Right cardiac atrium (tissue), 5 donors: ENCODE measurements at regions of chr5 and their contacts with region 1.

Region 1: DNA sequence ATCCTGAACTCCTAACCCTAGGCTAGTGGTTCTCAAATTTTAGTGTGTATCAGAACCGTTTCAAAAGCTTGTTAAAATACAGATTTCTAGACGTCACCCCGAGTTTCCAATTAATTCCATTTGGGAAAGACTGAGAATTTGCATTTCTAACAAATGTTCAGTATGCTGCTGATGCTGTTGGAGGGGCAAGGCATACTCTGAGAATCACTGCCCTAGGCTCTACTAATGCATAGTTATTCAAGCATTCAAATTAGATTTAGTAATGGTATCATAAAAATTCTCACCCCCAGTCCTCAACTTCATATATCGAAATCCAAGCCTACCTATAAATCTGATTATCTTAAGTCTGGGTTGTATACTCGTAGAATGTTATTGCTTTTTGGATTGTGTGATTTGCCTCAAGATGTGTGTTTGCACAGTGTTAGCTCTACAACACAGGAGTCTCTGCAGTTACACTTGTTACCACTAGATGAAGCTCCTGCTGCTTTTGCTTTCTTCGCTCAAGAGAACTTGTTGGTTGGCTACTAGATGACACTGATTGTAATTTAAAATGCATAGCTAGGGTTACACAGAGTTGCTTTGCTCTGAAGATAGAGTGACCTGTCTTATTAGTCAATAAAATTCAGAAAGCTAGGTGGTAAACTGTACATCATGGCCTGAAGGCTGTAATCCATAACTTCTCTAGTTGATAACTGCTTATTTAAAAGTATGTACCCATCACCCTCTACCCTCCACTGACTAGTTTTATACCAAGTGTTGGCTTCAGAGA is 7.5 kb upstream of the ERAP2 start:
- DNase-seq: no peak
- ATAC-seq: peak; percentile 84 to 91
- H3K4me3 ChIP-seq: no peak overlapping the region
- H3K27ac ChIP-seq: no peak overlapping the region
- H3K4me1 ChIP-seq: no peaks in the 10 kb centered on the region
- H3K27me3 ChIP-seq: no peaks in the 10 kb centered on the region

Region 2: GRCh38 chr5:97149709-97150108 is 280.9 kb after region 1 on chr5:
- intact Hi-C with region 1: loop called in 1 of 4 experiments (anchors 10 kb)
- DNase-seq: no peak
- ATAC-seq: no peak
- H3K4me3 ChIP-seq: no peak overlapping the region
- H3K27ac ChIP-seq: no peak overlapping the region
- H3K4me1 ChIP-seq: no peaks in the 10 kb centered on the region
- H3K27me3 ChIP-seq: no peaks in the 10 kb centered on the region